ENCODE measurements at regions of chr1 and their contacts with region 1.

Region 1: GRCh38 chr1:173867753-173868265 is at the start of gene GAS5:
- DNase-seq: peak; percentile 100
- H3K4me3 ChIP-seq: peak within 1 kb of the TSS; percentile 92 to 99 (median 96)
- H3K27ac ChIP-seq: peak within 1 kb of the TSS; percentile 92 to 99 (median 97)
- H3K4me1 ChIP-seq: peaks cover 25 to 60% (median 53%) of the 10 kb centered on the region in 4 donors
- H3K27me3 ChIP-seq: no peaks in the 10 kb centered on the region
- CTCF ChIP-seq: no peak
- EP300 ChIP-seq: no peak
- POLR2A ChIP-seq: peak; percentile 97
- total RNA-seq, gene GAS5: 138 to 375 (median 203) TPM

Region 2: DNA sequence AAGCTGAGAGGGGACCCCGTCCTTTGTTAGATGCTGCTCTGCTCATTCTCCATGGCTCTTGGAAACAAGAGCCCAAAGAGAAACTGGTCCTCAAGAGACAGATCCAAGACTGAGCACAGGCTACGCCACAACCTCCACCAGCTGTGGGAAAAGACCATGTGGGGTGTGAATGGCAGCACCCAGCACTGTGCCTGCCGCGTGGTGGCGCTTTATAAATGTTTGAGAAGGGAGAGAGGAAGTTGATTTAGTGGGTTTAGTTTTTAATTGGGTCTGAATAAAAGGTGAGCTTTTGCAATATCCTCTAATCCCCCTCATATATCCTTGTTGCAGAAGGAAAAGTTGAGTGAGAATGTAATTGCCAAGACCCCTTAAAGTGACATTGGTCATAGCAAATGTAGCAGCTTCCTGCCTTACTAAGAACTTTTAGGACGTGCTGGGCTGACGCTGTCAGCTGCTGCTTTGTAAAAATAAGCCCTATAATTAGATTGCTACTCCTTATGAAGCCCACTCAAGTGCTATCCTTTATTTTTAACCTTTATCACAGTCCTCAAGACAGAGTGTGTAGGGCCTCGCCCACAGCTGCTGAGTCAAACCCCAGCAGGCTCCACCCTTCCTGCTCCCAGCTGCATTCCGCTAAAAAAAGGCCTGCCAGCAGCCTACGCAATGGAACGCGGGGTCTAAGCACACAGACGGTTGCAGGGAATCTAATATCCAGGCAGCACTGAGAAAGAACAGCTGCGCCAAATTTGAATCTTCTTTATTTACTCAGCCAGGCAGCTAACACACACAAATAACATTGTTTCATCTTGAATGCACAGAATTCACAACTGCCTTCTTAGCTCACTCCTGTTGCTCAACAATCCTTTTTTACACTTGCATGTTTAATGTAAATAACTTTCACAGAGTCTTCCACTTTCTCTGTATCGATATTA is 438.1 kb before region 1 on chr1:
- intact Hi-C with region 1: loop called (anchors 5 kb)
- DNase-seq: peak; percentile 95
- H3K4me3 ChIP-seq: peak overlapping the region; percentile 28 to 41 (median 33)
- H3K27ac ChIP-seq: peak overlapping the region; percentile 79 to 88 (median 84)
- H3K4me1 ChIP-seq: peaks cover 26 to 33% (median 31%) of the 10 kb centered on the region in 4 donors
- H3K27me3 ChIP-seq: no peaks in the 10 kb centered on the region
- CTCF ChIP-seq: peak; percentile 67 to 73 (median 70)
- EP300 ChIP-seq: no peak
- POLR2A ChIP-seq: no peak

Region 3: GRCh38 chr1:173824331-173825081 is 43.3 kb before region 1 on chr1 and contains the starts of genes CENPL and DARS2:
- intact Hi-C with region 1: loop called (anchors 2 kb)
- DNase-seq: peak; percentile 98
- H3K4me3 ChIP-seq: peak within 1 kb of the TSS; percentile 80 to 86 (median 82)
- H3K27ac ChIP-seq: peak within 1 kb of the TSS; percentile 90 to 95 (median 94)
- H3K4me1 ChIP-seq: peaks cover 10 to 39% (median 24%) of the 10 kb centered on the region in 4 donors
- H3K27me3 ChIP-seq: no peaks in the 10 kb centered on the region
- CTCF ChIP-seq: no peak
- EP300 ChIP-seq: no peak
- POLR2A ChIP-seq: no peak
- total RNA-seq, gene CENPL: 3.6 to 7.1 (median 5.8) TPM
- total RNA-seq, gene DARS2: 5.5 to 9.1 (median 7.7) TPM

Region 4: GRCh38 chr1:173954179-173954578 is 86.4 kb after region 1 on chr1:
- intact Hi-C with region 1: loop called (anchors 10 kb)
- DNase-seq: no peak
- H3K4me3 ChIP-seq: no peak overlapping the region
- H3K27ac ChIP-seq: no peak overlapping the region
- H3K4me1 ChIP-seq: no peaks in the 10 kb centered on the region
- H3K27me3 ChIP-seq: no peaks in the 10 kb centered on the region
- CTCF ChIP-seq: no peak
- EP300 ChIP-seq: no peak
- POLR2A ChIP-seq: no peak

Region 5: DNA sequence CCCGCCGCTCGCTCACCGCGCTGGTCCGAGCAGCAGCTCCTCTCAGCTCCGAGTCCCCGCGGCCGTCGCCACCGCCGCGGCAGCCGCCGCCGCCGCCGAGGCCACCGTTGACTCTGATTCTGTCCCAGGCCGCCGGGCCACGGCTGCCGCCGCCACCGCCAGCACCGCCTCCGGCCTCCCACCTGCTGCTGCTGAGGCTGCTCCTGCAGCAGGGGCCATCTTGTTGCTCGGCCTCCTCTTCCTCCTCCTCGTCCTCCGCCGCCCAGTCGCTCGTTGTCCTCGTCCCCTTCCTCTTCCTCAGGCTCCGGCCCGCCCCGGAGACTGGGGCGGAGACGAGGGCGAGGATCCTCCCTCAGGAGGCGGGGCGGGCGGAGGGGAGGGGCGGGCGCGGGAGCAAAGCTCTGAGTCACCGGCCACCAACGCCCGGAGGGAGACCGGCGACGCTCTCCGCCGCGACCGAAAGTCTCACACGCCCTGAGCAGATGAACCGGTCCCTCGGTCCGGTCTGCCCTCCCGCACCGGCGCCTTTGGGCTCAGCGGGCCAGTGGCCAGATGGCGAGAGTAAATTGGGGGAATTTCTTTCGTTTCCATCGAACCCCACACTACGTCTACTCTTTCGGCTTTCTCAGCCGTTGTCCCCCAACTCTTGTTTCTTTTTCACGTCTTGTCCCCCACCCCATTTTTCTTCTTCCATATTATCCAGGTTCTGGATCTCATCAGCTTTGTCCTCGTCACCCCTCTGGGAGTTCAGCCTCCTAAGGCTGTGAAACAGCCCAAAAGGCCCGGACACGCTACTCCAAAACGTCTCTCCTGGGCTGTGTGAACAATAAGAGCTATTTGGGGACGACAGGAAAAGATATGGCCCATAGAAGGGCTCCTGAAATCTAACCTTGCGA is 154.5 kb after region 1 on chr1 and contains the start of gene RC3H1:
- intact Hi-C with region 1: loop called (anchors 5 kb)
- DNase-seq: peak; percentile 96
- H3K4me3 ChIP-seq: peak within 1 kb of the TSS; percentile 90 to 98 (median 94)
- H3K27ac ChIP-seq: peak within 1 kb of the TSS; percentile 95 to 97 (median 96)
- H3K4me1 ChIP-seq: peaks cover 49 to 56% (median 50%) of the 10 kb centered on the region in 4 donors
- H3K27me3 ChIP-seq: no peaks in the 10 kb centered on the region
- CTCF ChIP-seq: no peak
- EP300 ChIP-seq: no peak
- POLR2A ChIP-seq: peak; percentile 52
- total RNA-seq, gene RC3H1: 35.7 to 43.8 (median 39.3) TPM

Measured in esophagus muscularis mucosa (tissue), 4 donors.